Psoas muscle (tissue), 8 donors: ENCODE measurements at regions of chr11 and their contacts with region 1.

Region 1: GRCh38 chr11:125180413-125181305 is 16.1 kb downstream of the PKNOX2 start:
- DNase-seq: no peak
- ATAC-seq: no peak
- H3K4me3 ChIP-seq: no peak overlapping the region
- H3K27ac ChIP-seq: no peak overlapping the region
- H3K4me1 ChIP-seq: peaks cover 24% of the 10 kb centered on the region
- H3K27me3 ChIP-seq: no peaks in the 10 kb centered on the region
- CTCF ChIP-seq: no peak

Region 2: GRCh38 chr11:125224391-125225010 is 43.8 kb after region 1 on chr11:
- intact Hi-C with region 1: loop called in 1 of 2 experiments (anchors 5 kb)
- DNase-seq: peak in 1 of 2 donors; percentile 31
- ATAC-seq: no peak
- H3K4me3 ChIP-seq: no peak overlapping the region
- H3K27ac ChIP-seq: peak overlapping the region; percentile 78
- H3K4me1 ChIP-seq: peaks cover 40% of the 10 kb centered on the region
- H3K27me3 ChIP-seq: no peaks in the 10 kb centered on the region
- CTCF ChIP-seq: peak; percentile 18